ENCODE measurements at regions of chr15 and their contacts with region 1.

Region 1: GRCh38 chr15:62389885-62390790 is 225.1 kb upstream of the C2CD4B start:
- DNase-seq: peak; percentile 63 to 78
- ATAC-seq: peak; percentile 77 to 92 (median 85)
- H3K4me3 ChIP-seq: peak within 1 kb of the TSS; percentile 63 to 99 (median 88)
- H3K27ac ChIP-seq: peak within 1 kb of the TSS; percentile 56 to 94 (median 88)
- H3K4me1 ChIP-seq: peaks cover 0 to 30% (median 21%) of the 10 kb centered on the region in 9 donors
- H3K27me3 ChIP-seq: peaks cover 0 to 22% (median 0%) of the 10 kb centered on the region in 7 donors
- CTCF ChIP-seq: no peak

Region 2: GRCh38 chr15:62269504-62269903 is 120.6 kb before region 1 on chr15:
- intact Hi-C with region 1: no loop called
- DNase-seq: no peak
- ATAC-seq: no peak
- H3K4me3 ChIP-seq: no peak overlapping the region
- H3K27ac ChIP-seq: no peak overlapping the region
- H3K4me1 ChIP-seq: no peaks in the 10 kb centered on the region
- H3K27me3 ChIP-seq: peaks cover 0 to 2% (median 0%) of the 10 kb centered on the region in 7 donors
- CTCF ChIP-seq: no peak

Region 3: GRCh38 chr15:62324382-62324781 is 65.8 kb before region 1 on chr15:
- intact Hi-C with region 1: no loop called
- DNase-seq: no peak
- ATAC-seq: no peak
- H3K4me3 ChIP-seq: no peak overlapping the region
- H3K27ac ChIP-seq: no peak overlapping the region
- H3K4me1 ChIP-seq: no peaks in the 10 kb centered on the region
- H3K27me3 ChIP-seq: peaks cover 0 to 26% (median 8%) of the 10 kb centered on the region in 7 donors
- CTCF ChIP-seq: no peak

Region 4: GRCh38 chr15:62362608-62363007 is 27.5 kb before region 1 on chr15:
- intact Hi-C with region 1: no loop called
- DNase-seq: no peak
- ATAC-seq: peak in 1 of 8 donors; percentile 58
- H3K4me3 ChIP-seq: no peak overlapping the region
- H3K27ac ChIP-seq: no peak overlapping the region
- H3K4me1 ChIP-seq: no peaks in the 10 kb centered on the region
- H3K27me3 ChIP-seq: peaks cover 0 to 21% (median 0%) of the 10 kb centered on the region in 7 donors
- CTCF ChIP-seq: no peak

Region 5: DNA sequence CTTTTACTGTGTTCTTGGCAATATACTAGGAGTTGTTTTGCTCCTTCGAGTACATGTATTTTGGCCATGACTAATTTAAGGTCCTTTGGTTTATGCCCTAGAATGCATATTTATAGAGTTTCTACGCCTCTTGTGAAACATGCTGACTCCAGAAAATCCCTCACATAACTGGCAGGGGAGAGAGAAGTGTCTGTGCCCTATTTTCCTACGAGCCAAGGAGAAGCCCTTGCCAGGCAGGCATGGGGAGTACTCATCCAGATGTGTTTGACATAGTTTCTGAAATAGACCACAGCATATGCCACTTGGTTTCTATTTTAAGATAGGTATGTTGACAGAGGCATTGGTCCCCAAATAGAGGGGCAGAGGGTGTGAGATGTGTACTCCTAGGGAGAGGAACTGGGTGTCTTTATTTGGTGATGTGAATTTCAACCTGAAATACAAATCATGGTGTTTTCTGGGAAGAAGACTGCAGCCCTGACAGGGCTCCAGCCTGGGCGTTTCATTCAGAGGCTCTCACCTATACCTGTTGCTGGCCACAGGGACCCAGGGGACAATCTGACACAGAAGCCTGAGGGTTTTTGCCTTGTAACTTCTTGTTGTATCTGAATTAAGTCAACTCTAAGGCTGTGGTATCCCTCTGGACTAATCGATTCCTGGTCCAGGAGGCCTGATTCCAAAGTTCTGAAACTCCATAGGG is 42.7 kb after region 1 on chr15:
- intact Hi-C with region 1: loop called in 1 of 10 experiments (anchors 5 kb)
- DNase-seq: peak in 1 of 2 donors; percentile 33
- ATAC-seq: peak; percentile 64 to 95 (median 90)
- H3K4me3 ChIP-seq: no peak overlapping the region
- H3K27ac ChIP-seq: peak overlapping the region in 9 of 10 donors; percentile 8 to 62 (median 48)
- H3K4me1 ChIP-seq: peaks cover 0 to 38% (median 21%) of the 10 kb centered on the region in 9 donors
- H3K27me3 ChIP-seq: no peaks in the 10 kb centered on the region
- CTCF ChIP-seq: no peak

Region 6: GRCh38 chr15:62444104-62445022 is 54.2 kb after region 1 on chr15:
- intact Hi-C with region 1: no loop called
- DNase-seq: no peak
- ATAC-seq: peak in 5 of 8 donors; percentile 26 to 73 (median 36)
- H3K4me3 ChIP-seq: no peak overlapping the region
- H3K27ac ChIP-seq: peak overlapping the region in 3 of 10 donors; percentile 9 to 48 (median 20)
- H3K4me1 ChIP-seq: peaks cover 0 to 49% (median 31%) of the 10 kb centered on the region in 9 donors
- H3K27me3 ChIP-seq: no peaks in the 10 kb centered on the region
- CTCF ChIP-seq: no peak

Region 7: GRCh38 chr15:62469874-62470688 is 79.9 kb after region 1 on chr15:
- intact Hi-C with region 1: loop called in 4 of 10 experiments (anchors 5 to 10 kb)
- DNase-seq: peak; percentile 40 to 45
- ATAC-seq: peak; percentile 20 to 86 (median 62)
- H3K4me3 ChIP-seq: no peak overlapping the region
- H3K27ac ChIP-seq: peak overlapping the region; percentile 53 to 85 (median 72)
- H3K4me1 ChIP-seq: peaks cover 12 to 82% (median 60%) of the 10 kb centered on the region in 9 donors
- H3K27me3 ChIP-seq: no peaks in the 10 kb centered on the region
- CTCF ChIP-seq: no peak

Region 8: GRCh38 chr15:62515696-62516395 is 125.7 kb after region 1 on chr15:
- intact Hi-C with region 1: loop called in 1 of 10 experiments (anchors 10 kb)
- DNase-seq: no peak
- ATAC-seq: peak in 5 of 8 donors; percentile 46 to 64 (median 50)
- H3K4me3 ChIP-seq: no peak overlapping the region
- H3K27ac ChIP-seq: peak overlapping the region in 3 of 10 donors; percentile 17 to 38 (median 20)
- H3K4me1 ChIP-seq: peaks cover 0 to 44% (median 7%) of the 10 kb centered on the region in 9 donors
- H3K27me3 ChIP-seq: no peaks in the 10 kb centered on the region
- CTCF ChIP-seq: no peak

Region 9: DNA sequence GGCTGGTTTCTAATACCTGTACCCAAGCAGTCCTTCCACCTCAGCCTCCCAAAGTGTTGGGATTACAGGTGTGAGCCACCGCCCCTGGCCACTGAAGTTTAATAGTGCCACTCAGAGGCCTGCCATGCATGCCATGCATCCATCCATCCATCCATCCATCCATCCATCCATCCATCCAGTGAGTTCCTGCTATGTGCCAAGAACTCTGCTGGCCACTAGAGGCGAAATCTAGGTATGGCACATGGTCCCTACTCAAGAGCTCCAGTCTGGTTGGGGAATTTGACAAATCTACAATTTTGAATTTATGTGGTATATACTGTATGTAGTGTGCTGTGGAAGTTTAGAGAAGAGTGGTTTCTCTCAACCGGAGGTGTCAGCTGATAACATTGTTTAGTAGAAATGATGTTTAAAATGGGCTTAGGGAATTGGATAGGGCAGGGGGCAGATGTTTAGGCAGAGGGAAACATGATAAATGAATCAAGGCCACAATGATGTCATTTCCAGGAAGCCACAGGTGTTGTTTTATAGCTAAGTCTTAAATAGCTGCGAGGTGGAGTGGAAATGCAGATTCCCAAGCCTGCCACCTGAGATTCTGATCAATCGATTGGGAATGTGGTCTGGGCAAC is 159.3 kb after region 1 on chr15:
- intact Hi-C with region 1: loop called in 3 of 10 experiments (anchors 10 kb)
- DNase-seq: no peak
- ATAC-seq: no peak
- H3K4me3 ChIP-seq: no peak overlapping the region
- H3K27ac ChIP-seq: no peak overlapping the region
- H3K4me1 ChIP-seq: peaks cover 19 to 54% (median 45%) of the 10 kb centered on the region in 9 donors
- H3K27me3 ChIP-seq: no peaks in the 10 kb centered on the region
- CTCF ChIP-seq: peak; percentile 7 to 55 (median 41)

Region 10: GRCh38 chr15:62649793-62650420 is 259.8 kb after region 1 on chr15:
- intact Hi-C with region 1: loop called in 9 of 10 experiments (anchors 1 to 10 kb)
- DNase-seq: peak in 1 of 2 donors; percentile 49
- ATAC-seq: peak in 7 of 8 donors; percentile 21 to 81 (median 74)
- H3K4me3 ChIP-seq: no peak overlapping the region
- H3K27ac ChIP-seq: peak overlapping the region in 7 of 10 donors; percentile 14 to 83 (median 37)
- H3K4me1 ChIP-seq: peaks cover 0 to 32% (median 8%) of the 10 kb centered on the region in 9 donors
- H3K27me3 ChIP-seq: no peaks in the 10 kb centered on the region
- CTCF ChIP-seq: no peak

Region 11: GRCh38 chr15:62698646-62699045 is 308.5 kb after region 1 on chr15:
- intact Hi-C with region 1: loop called in 2 of 10 experiments (anchors 5 to 10 kb)
- DNase-seq: no peak
- ATAC-seq: peak in 5 of 8 donors; percentile 40 to 70 (median 46)
- H3K4me3 ChIP-seq: no peak overlapping the region
- H3K27ac ChIP-seq: no peak overlapping the region
- H3K4me1 ChIP-seq: no peaks in the 10 kb centered on the region
- H3K27me3 ChIP-seq: no peaks in the 10 kb centered on the region
- CTCF ChIP-seq: peak in 5 of 9 donors; percentile 7 to 16 (median 14)